Heart right ventricle (tissue), 16 donors: ENCODE measurements at regions of chr9 and their contacts with region 1.

Region 1: GRCh38 chr9:6197330-6197729 is 18.3 kb upstream of the IL33 start:
- DNase-seq: peak in 1 of 2 donors; percentile 18
- ATAC-seq: peak in 7 of 8 donors; percentile 43 to 87 (median 74)
- H3K4me3 ChIP-seq: no peak overlapping the region
- H3K27ac ChIP-seq: peak overlapping the region in 4 of 10 donors; percentile 17 to 68 (median 41)
- H3K4me1 ChIP-seq: peaks cover 0 to 30% (median 6%) of the 10 kb centered on the region in 9 donors
- H3K27me3 ChIP-seq: no peaks in the 10 kb centered on the region
- CTCF ChIP-seq: peak; percentile 42 to 78 (median 62)

Region 2: DNA sequence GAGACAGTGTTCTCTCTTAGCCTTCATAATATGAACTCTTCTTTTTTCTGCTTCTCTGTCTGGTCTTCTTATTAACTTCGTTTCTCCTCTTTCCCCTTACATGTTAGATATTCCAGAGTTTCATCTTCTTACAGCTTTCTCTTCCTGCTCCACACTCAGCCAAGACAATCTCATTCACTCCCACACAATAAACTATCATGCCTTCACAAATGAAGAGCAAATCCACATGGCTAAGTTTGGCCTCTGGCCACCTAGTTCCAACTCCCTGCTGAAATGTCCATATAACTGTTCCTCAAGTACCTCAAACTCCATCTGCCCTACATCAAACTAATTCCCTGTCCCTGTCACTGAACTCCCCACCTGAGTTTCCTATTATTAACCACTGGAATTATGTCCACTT is 36.7 kb after region 1 on chr9:
- intact Hi-C with region 1: loop called in 1 of 10 experiments (anchors 1 kb)
- DNase-seq: peak in 1 of 2 donors; percentile 16
- ATAC-seq: peak in 3 of 8 donors; percentile 34 to 52 (median 39)
- H3K4me3 ChIP-seq: no peak overlapping the region
- H3K27ac ChIP-seq: peak overlapping the region in 5 of 10 donors; percentile 7 to 55 (median 37)
- H3K4me1 ChIP-seq: peaks cover 2 to 62% (median 30%) of the 10 kb centered on the region in 9 donors
- H3K27me3 ChIP-seq: no peaks in the 10 kb centered on the region
- CTCF ChIP-seq: no peak

Region 3: GRCh38 chr9:6328103-6328502 is 130.8 kb after region 1 on chr9 and contains the start of gene TPD52L3:
- intact Hi-C with region 1: no loop called
- DNase-seq: no peak
- ATAC-seq: peak in 1 of 8 donors; percentile 34
- H3K4me3 ChIP-seq: no peak within 1 kb of the TSS
- H3K27ac ChIP-seq: no peak within 1 kb of the TSS
- H3K4me1 ChIP-seq: no peaks in the 10 kb centered on the region
- H3K27me3 ChIP-seq: peaks cover 0 to 2% (median 0%) of the 10 kb centered on the region in 7 donors
- CTCF ChIP-seq: no peak
- total RNA-seq, gene TPD52L3: not detected